ENCODE measurements at regions of chr1 and their contacts with region 1.

Region 1: GRCh38 chr1:205211169-205211838 is at the start of gene DSTYK:
- DNase-seq: peak; percentile 93
- H3K4me3 ChIP-seq: peak within 1 kb of the TSS; percentile 71 to 97 (median 81)
- H3K27ac ChIP-seq: peak within 1 kb of the TSS; percentile 80
- H3K4me1 ChIP-seq: peaks cover 4% of the 10 kb centered on the region
- H3K27me3 ChIP-seq: no peaks in the 10 kb centered on the region
- CTCF ChIP-seq: no peak
- total RNA-seq, gene DSTYK: 11.0 to 19.2 TPM

Region 2: GRCh38 chr1:205121660-205122488 is 89.4 kb before region 1 on chr1 and contains the start of gene RBBP5:
- CTCF ChIA-PET with region 1: no interaction called
- dilution Hi-C with region 1: no loop called
- in situ Hi-C with region 1: no loop called
- intact Hi-C with region 1: loop called (anchors 1 kb)
- DNase-seq: peak; percentile 93
- H3K4me3 ChIP-seq: peak within 1 kb of the TSS; percentile 68 to 96 (median 85)
- H3K27ac ChIP-seq: peak within 1 kb of the TSS; percentile 99
- H3K4me1 ChIP-seq: peaks cover 12% of the 10 kb centered on the region
- H3K27me3 ChIP-seq: no peaks in the 10 kb centered on the region
- CTCF ChIP-seq: peak; percentile 67 to 85
- total RNA-seq, gene RBBP5: 15.2 to 17.5 TPM

Region 3: GRCh38 chr1:205179842-205180241 is 31.5 kb before region 1 on chr1:
- CTCF ChIA-PET with region 1: no interaction called
- dilution Hi-C with region 1: no loop called
- in situ Hi-C with region 1: loop called in 1 of 2 experiments (anchors 5 kb)
- intact Hi-C with region 1: loop called (anchors 1 kb)
- DNase-seq: no peak
- H3K4me3 ChIP-seq: no peak overlapping the region
- H3K27ac ChIP-seq: no peak overlapping the region
- H3K4me1 ChIP-seq: peaks cover 15% of the 10 kb centered on the region
- H3K27me3 ChIP-seq: no peaks in the 10 kb centered on the region
- CTCF ChIP-seq: no peak

Region 4: GRCh38 chr1:205284343-205285144 is 73.2 kb after region 1 on chr1:
- CTCF ChIA-PET with region 1: no interaction called
- dilution Hi-C with region 1: no loop called
- in situ Hi-C with region 1: no loop called
- intact Hi-C with region 1: no loop called
- DNase-seq: peak; percentile 100
- H3K4me3 ChIP-seq: no peak overlapping the region
- H3K27ac ChIP-seq: peak overlapping the region; percentile 26
- H3K4me1 ChIP-seq: peaks cover 48% of the 10 kb centered on the region
- H3K27me3 ChIP-seq: no peaks in the 10 kb centered on the region
- CTCF ChIP-seq: peak in 1 of 2 donors; percentile 25

Region 5: DNA sequence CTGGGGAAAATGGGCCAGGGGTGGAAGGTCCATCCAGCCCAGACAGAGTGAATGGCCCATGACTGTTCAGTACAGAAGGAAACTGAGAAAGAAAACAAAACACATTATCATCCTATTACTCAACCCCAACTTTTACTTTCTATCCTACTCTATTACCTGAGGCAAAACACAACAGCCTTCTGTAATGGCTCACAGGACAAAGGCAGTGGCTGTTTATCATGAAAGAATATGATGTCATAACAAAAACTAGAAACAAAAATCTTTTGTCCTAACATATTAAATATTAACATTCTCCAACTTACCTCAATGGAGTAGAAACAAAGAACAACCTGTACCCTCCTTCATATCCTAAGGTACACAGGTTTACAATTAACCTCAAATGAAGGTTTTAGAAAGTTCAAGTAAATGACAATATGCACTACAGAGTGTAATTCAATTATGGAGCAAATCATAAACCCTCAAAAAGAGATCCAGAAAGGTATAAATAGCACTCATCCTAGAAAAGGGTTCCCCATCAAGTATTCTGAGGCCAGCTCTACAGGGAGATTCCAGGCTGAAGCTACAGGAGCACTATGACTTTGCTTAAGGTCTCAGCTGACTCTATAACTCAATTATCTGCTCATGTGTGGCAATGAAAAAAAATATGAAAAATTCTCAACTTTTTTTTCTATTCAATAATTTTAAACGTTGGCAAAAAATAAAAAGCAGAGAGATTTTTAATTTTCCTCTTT is 405.4 kb after region 1 on chr1:
- CTCF ChIA-PET with region 1: no interaction called
- dilution Hi-C with region 1: no loop called
- in situ Hi-C with region 1: no loop called
- intact Hi-C with region 1: no loop called
- DNase-seq: peak; percentile 84
- H3K4me3 ChIP-seq: no peak overlapping the region
- H3K27ac ChIP-seq: peak overlapping the region; percentile 46
- H3K4me1 ChIP-seq: peaks cover 12% of the 10 kb centered on the region
- H3K27me3 ChIP-seq: no peaks in the 10 kb centered on the region
- CTCF ChIP-seq: no peak

Measured in mammary epithelial cell (primary cell).